MCF 10A (cell line): ENCODE measurements at regions of chr10 and their contacts with region 1.

Region 1: GRCh38 chr10:21278491-21279239 is 246.8 kb downstream of the SKIDA1 start:
- DNase-seq: peak; percentile 95
- H3K4me3 Mint-ChIP-seq: no peak overlapping the region
- H3K27ac Mint-ChIP-seq: no peak overlapping the region
- H3K4me1 Mint-ChIP-seq: peaks cover 8% of the 10 kb centered on the region
- H3K27me3 Mint-ChIP-seq: no peaks in the 10 kb centered on the region
- CTCF ChIP-seq: peak; percentile 92

Region 2: GRCh38 chr10:21336476-21337170 is 58.0 kb after region 1 on chr10:
- CTCF ChIA-PET with region 1: interaction called, 8 read pairs
- POLR2A ChIA-PET with region 1: interaction called, 4 read pairs
- intact Hi-C with region 1: loop called (anchors 1 kb)
- DNase-seq: peak; percentile 97
- H3K4me3 Mint-ChIP-seq: peak overlapping the region; percentile 54
- H3K27ac Mint-ChIP-seq: peak overlapping the region; percentile 83
- H3K4me1 Mint-ChIP-seq: peaks cover 40% of the 10 kb centered on the region
- H3K27me3 Mint-ChIP-seq: no peaks in the 10 kb centered on the region
- CTCF ChIP-seq: peak; percentile 8

Region 3: DNA sequence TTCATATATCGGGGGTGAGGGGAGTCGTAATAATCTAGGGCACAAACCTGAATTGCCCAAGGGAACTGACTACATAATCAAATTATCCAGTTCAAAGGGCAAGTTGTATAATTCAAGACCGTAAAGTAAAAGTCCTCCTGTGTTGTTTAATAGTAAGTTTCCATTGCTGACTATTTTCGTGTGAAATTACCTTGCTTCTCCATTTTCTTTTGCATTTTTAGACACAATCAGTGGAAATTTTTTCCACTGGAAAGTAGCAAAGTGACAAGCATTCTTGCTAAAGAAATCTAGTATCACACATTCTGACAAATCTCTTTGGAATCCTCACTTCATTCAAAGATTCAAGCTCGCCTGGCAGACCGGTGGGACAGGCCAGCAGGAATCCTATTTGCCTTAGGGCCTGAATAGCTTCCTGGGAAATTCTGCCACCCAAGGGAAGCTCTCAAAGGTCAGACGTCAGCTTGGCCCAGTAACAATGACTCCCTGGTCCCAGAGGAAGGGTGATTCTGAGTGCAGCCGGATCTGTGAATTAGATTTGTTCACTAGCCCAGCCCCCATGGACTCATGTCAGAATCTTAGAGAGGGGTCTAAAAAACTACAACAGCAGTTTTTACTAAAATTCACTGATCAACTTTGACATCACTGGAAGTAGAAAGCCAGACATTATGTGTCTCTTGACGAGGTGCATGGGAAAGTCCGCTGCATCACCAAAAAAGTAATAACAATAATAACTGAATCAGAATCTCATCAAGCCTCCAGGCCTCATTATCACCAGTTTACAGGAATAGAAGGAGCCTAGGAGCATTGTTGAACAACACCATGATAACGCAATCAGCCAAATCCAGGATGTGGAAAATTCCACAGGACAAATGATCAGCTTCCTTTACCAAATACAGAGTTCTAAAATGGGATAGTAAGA is 85.8 kb after region 1 on chr10:
- CTCF ChIA-PET with region 1: interaction called, 11 read pairs
- POLR2A ChIA-PET with region 1: interaction called, 3 read pairs
- intact Hi-C with region 1: no loop called
- DNase-seq: peak; percentile 94
- H3K4me3 Mint-ChIP-seq: peak overlapping the region; percentile 60
- H3K27ac Mint-ChIP-seq: peak overlapping the region; percentile 92
- H3K4me1 Mint-ChIP-seq: peaks cover 50% of the 10 kb centered on the region
- H3K27me3 Mint-ChIP-seq: no peaks in the 10 kb centered on the region
- CTCF ChIP-seq: no peak

Region 4: DNA sequence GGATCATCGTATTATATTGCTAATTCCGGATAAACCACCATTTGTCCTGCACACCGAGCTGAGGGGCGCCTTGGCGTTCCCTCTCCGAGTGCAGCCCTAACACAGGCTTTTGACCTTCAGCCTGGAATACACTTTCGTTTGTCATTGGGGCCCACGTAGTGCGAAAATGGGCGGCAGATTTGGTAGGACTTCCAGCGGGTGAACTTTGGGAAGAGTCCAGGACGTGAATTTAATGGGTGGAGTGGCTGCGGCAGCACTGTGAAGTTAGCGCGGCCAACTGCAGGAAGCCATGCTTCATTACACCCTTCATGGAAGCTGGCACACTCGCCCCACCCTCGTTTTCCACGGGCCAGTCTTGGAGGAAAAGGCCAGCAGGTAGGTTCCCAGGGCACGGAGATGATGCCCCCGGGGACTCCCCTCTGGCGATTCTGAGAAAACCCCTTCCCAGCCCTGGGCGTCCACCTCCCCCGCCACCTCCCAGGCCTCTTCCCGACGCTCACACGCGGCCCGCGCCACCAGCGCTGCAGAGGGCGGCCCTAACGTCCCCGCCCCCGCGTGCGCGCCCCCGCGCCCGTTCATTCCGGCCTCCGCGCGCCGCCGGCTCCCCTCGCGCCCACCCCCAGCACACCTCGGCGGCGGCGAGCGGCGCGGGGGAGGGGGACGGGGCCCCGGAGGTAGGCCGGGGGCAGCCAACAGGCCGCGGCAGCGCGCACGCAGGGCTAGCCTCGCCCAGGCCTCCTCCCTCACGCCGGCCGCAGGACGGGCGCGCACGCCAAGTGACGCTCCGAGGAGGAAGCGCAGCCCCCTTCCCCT is 255.0 kb after region 1 on chr10 and contains the start of gene MLLT10:
- CTCF ChIA-PET with region 1: interaction called, 7 read pairs
- POLR2A ChIA-PET with region 1: interaction called, 3 read pairs
- intact Hi-C with region 1: loop called (anchors 2 kb)
- DNase-seq: peak; percentile 94
- H3K4me3 Mint-ChIP-seq: peak within 1 kb of the TSS; percentile 84
- H3K27ac Mint-ChIP-seq: peak within 1 kb of the TSS; percentile 97
- H3K4me1 Mint-ChIP-seq: peaks cover 6% of the 10 kb centered on the region
- H3K27me3 Mint-ChIP-seq: no peaks in the 10 kb centered on the region
- CTCF ChIP-seq: no peak
- total RNA-seq, gene MLLT10: 39.3 and 47.5 TPM in 2 replicates

Region 5: GRCh38 chr10:21953585-21954057 is 675.0 kb after region 1 on chr10:
- CTCF ChIA-PET with region 1: interaction called, 4 read pairs
- POLR2A ChIA-PET with region 1: interaction called, 3 read pairs
- intact Hi-C with region 1: loop called (anchors 1 kb)
- DNase-seq: peak; percentile 71
- H3K4me3 Mint-ChIP-seq: no peak overlapping the region
- H3K27ac Mint-ChIP-seq: no peak overlapping the region
- H3K4me1 Mint-ChIP-seq: no peaks in the 10 kb centered on the region
- H3K27me3 Mint-ChIP-seq: no peaks in the 10 kb centered on the region
- CTCF ChIP-seq: peak; percentile 40